Psoas muscle (tissue), 8 donors: ENCODE measurements at regions of chr16 and their contacts with region 1.

Region 1: DNA sequence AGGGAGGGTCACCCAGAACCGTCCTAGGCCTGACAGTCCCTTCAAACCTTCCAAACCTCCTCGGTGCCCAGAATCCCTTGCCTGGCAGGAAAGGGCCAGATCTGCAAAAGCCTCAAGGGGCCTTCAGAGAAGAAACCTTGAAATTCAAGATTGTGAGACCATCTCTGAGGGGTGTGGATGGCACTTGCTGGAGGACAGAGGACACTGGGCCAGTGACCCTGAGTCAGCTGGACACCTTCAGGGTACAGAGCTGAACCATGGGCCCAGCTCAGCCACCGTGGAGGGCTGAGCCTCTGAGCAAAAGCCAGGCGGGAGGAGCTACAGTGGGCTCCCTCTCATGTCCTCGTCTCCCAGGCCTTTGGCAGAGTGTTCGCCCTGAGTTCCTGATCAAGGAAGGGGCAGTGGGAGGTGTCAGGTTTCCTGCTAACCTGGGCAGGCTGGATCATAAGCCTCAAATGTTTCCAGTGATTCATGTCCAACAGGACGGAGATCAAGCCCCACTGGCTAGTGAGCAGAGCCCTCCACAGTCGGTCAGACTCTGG is 3.0 kb downstream of the PDILT start:
- DNase-seq: no peak
- ATAC-seq: peak in 1 of 4 donors; percentile 30
- H3K4me3 ChIP-seq: no peak overlapping the region
- H3K27ac ChIP-seq: no peak overlapping the region
- H3K4me1 ChIP-seq: no peaks in the 10 kb centered on the region
- H3K27me3 ChIP-seq: no peaks in the 10 kb centered on the region
- CTCF ChIP-seq: no peak

Region 2: GRCh38 chr16:20225228-20225739 is 176.3 kb before region 1 on chr16:
- intact Hi-C with region 1: no loop called
- DNase-seq: no peak
- ATAC-seq: no peak
- H3K4me3 ChIP-seq: no peak overlapping the region
- H3K27ac ChIP-seq: no peak overlapping the region
- H3K4me1 ChIP-seq: no peaks in the 10 kb centered on the region
- H3K27me3 ChIP-seq: no peaks in the 10 kb centered on the region
- CTCF ChIP-seq: no peak

Region 3: GRCh38 chr16:20388846-20389245 is 12.7 kb before region 1 on chr16:
- intact Hi-C with region 1: loop called in 1 of 2 experiments (anchors 2 kb)
- DNase-seq: no peak
- ATAC-seq: no peak
- H3K4me3 ChIP-seq: no peak overlapping the region
- H3K27ac ChIP-seq: no peak overlapping the region
- H3K4me1 ChIP-seq: no peaks in the 10 kb centered on the region
- H3K27me3 ChIP-seq: peaks cover 0 to 4% (median 2%) of the 10 kb centered on the region in 3 donors
- CTCF ChIP-seq: no peak

Region 4: DNA sequence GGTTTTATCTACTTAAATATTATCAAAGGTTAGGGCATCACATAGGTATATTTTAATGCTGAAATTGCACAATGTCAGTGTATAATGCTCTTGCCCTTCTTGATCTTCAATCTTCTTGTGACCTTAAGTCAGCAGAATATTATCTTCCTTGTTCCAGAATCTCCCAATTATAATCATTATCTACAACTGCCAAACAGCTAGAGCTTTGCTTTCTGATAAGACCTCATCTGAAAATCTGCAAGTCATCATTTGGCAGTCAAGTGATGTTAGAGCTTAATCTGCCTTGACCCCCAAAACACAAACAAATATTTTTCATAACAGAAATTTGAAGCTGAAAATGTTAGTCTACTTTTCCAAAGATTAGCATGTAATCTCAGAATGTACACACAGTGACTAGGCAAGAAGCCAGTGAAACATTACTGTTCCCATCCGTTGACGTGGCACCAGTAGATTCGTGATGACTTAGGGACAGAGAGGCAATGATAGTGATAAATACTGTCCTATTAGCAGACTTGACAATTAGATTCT is 424.6 kb after region 1 on chr16:
- intact Hi-C with region 1: no loop called
- DNase-seq: no peak
- ATAC-seq: no peak
- H3K4me3 ChIP-seq: no peak overlapping the region
- H3K27ac ChIP-seq: no peak overlapping the region
- H3K4me1 ChIP-seq: no peaks in the 10 kb centered on the region
- H3K27me3 ChIP-seq: no peaks in the 10 kb centered on the region
- CTCF ChIP-seq: no peak